ENCODE measurements at regions of chr19 and their contacts with region 1.

Region 1: DNA sequence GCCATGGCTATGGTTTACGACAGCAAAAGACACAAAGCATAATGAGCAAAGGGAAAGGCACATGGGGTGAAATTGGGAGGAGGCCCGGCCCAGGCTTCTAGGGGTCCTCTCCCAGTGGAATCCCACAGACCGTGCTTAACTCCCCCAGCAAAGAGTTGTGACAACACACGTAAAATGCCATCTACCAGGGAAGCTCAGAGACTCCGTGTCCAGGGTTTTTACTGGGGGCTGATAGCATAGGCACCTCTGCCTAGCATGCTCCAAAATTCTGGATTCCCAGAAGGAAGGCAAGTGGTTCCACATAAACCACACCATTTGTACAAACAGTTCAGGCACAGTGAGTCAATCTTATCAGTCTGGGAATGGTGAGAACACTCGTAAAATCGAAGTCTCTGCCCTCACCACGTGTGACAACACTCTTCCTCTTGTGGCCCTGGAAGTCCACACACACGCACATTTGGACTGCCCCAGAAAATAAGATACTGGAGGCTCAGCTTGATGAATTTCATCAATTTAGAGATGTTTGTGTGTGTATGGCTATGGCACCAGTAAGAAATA is 34.9 kb downstream of the RHPN2 start:
- DNase-seq: no peak
- H3K4me3 ChIP-seq: no peak overlapping the region
- H3K4me3 Mint-ChIP-seq: no peak overlapping the region
- H3K27ac Mint-ChIP-seq: no peak overlapping the region
- H3K4me1 ChIP-seq: peaks cover 17% of the 10 kb centered on the region
- H3K4me1 Mint-ChIP-seq: peaks cover 15% of the 10 kb centered on the region
- H3K27me3 ChIP-seq: no peaks in the 10 kb centered on the region
- H3K27me3 Mint-ChIP-seq: no peaks in the 10 kb centered on the region
- CTCF ChIP-seq: no peak

Region 2: DNA sequence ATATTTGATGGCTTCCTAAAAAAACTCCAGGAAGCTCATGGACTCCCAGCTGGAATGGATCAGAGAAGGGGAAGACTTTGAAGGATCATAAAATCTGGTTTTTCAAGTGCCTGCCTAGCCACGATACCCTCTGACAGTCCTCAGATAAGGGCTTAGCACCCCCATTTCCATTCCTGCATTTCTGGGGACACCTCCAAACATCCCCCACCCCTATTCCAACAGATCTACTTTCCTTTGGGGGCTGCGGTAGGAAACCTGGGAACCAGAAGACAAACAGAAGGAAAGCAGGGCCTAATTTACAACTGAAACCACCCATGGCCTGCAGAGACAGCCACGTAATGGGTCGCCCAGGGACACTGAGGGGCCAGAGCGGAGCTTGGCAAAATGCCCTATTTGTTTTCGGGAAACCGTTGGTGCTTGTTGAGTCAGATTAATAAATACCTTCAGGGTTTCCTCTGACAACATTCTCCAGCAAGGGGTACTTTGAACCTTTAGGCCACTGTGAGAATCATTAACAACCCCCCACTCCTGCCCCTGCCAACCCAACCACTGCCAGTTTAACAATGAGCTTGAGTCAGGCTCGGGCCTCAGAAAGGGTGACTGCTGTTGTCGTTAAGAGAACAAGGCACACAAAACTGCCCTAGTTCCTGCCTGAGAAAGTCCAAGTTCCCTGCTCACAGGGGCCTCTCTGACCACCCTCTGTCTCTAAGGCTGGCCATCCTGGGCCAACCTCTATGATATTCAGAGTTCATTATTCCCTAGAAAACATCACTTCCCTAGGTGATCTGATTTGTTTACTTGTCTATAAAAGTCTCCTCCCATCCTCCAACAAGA is 11.4 kb after region 1 on chr19:
- CTCF ChIA-PET with region 1: interaction called, 6 read pairs
- POLR2A ChIA-PET with region 1: interaction called, 13 read pairs
- intact Hi-C with region 1: no loop called
- DNase-seq: peak; percentile 74 to 86
- H3K4me3 ChIP-seq: no peak overlapping the region
- H3K4me3 Mint-ChIP-seq: peak overlapping the region; percentile 51
- H3K27ac Mint-ChIP-seq: peak overlapping the region; percentile 85
- H3K4me1 ChIP-seq: peaks cover 40% of the 10 kb centered on the region
- H3K4me1 Mint-ChIP-seq: peaks cover 36% of the 10 kb centered on the region
- H3K27me3 ChIP-seq: no peaks in the 10 kb centered on the region
- H3K27me3 Mint-ChIP-seq: no peaks in the 10 kb centered on the region
- CTCF ChIP-seq: no peak

Region 3: DNA sequence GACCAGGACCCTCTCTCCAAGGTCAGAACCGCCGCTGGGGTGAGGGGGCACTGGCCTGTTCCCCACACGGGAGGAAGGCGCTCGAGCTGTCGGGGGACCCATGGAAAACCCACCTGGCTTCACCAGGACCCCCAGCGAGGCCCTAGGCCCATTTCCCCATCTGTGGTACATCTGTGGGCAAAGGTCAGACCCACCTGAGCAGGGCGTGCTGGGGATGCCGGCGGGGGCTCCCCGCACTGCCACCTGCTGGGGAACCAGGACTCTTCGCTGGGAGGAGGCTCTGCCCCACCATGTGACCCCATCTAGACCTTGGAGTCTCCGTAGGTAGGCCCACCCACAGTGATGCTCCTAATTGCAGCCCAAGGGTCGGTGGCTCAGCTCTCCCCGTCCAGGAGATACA is 102.6 kb after region 1 on chr19:
- CTCF ChIA-PET with region 1: no interaction called
- POLR2A ChIA-PET with region 1: no interaction called
- intact Hi-C with region 1: no loop called
- DNase-seq: peak in 1 of 2 experiments; percentile 40
- H3K4me3 ChIP-seq: no peak overlapping the region
- H3K4me3 Mint-ChIP-seq: no peak overlapping the region
- H3K27ac Mint-ChIP-seq: no peak overlapping the region
- H3K4me1 ChIP-seq: no peaks in the 10 kb centered on the region
- H3K4me1 Mint-ChIP-seq: no peaks in the 10 kb centered on the region
- H3K27me3 ChIP-seq: no peaks in the 10 kb centered on the region
- H3K27me3 Mint-ChIP-seq: no peaks in the 10 kb centered on the region
- CTCF ChIP-seq: peak in 1 of 2 experiments; percentile 26

Measured in Caco-2 (cell line).